ENCODE measurements at regions of chr12 and their contacts with region 1.

Region 1: GRCh38 chr12:3885277-3886094 is 12.3 kb upstream of the PARP11 start:
- DNase-seq: peak in 1 of 2 experiments; percentile 67
- H3K4me3 ChIP-seq: no peak overlapping the region
- H3K4me3 Mint-ChIP-seq: no peak overlapping the region
- H3K27ac Mint-ChIP-seq: no peak overlapping the region
- H3K4me1 ChIP-seq: 0 out of 2 replicates have a peak, but pooled peaks cover 3% of the 10 kb centered on the region
- H3K4me1 Mint-ChIP-seq: peaks cover 14% of the 10 kb centered on the region
- H3K27me3 ChIP-seq: no peaks in the 10 kb centered on the region
- H3K27me3 Mint-ChIP-seq: peaks cover 7% of the 10 kb centered on the region
- CTCF ChIP-seq: peak; percentile 90 to 98

Region 2: DNA sequence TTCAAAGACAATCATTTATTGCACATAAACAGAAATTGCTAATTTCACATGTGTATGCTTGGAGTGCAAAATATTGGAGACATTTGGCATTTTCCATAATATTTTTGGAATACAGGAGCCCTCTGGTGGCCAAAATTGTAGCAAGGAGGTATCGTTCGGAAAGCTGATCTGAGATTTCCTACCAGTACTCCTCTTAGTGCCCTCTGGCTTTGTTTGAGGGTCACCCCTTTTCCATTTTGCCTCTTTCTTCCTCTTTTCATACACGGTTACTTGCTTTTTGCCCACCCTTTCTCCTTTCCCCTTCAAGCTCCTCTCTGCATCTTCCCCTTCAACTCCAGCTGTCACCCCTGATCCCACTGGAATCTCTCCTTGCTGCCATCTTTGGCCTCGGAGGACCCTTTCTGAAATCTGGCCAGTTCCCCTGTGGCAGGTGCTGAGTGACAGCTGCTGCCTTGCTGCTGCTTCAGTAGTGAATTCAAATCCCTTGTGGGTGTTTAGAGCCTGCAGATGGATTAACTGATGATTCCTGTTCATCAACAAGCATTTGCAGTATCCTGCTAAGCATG is 152.3 kb after region 1 on chr12:
- CTCF ChIA-PET with region 1: interaction called, 71 read pairs
- POLR2A ChIA-PET with region 1: no interaction called
- intact Hi-C with region 1: loop called (anchors 1 kb)
- DNase-seq: peak; percentile 54 to 82
- H3K4me3 ChIP-seq: no peak overlapping the region
- H3K4me3 Mint-ChIP-seq: no peak overlapping the region
- H3K27ac Mint-ChIP-seq: no peak overlapping the region
- H3K4me1 ChIP-seq: peaks cover 36% of the 10 kb centered on the region
- H3K4me1 Mint-ChIP-seq: peaks cover 38% of the 10 kb centered on the region
- H3K27me3 ChIP-seq: no peaks in the 10 kb centered on the region
- H3K27me3 Mint-ChIP-seq: no peaks in the 10 kb centered on the region
- CTCF ChIP-seq: peak; percentile 89 to 95

Region 3: DNA sequence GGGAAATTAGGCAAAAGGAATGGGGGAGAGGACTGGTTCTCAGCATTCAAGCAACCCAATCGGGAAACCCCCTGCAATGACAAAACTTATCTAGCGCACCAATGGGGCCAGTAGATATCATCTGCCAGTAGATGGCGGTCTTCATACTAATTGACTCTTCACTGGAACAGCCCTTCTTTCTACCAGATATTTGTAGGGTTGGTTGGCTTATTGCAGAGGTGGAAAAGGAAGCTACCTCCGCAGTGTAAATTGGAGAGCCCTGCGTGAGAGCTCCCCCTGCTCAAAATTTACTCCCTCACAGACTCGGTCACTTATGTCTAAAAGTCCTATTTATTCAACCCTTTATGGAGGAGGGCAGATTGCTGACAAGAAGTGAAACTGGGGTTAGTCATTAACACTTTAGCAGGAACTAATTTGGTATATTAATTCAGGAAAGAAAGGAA is 222.0 kb after region 1 on chr12:
- CTCF ChIA-PET with region 1: no interaction called
- POLR2A ChIA-PET with region 1: no interaction called
- intact Hi-C with region 1: loop called (anchors 2 kb)
- DNase-seq: peak; percentile 68 to 70
- H3K4me3 ChIP-seq: no peak overlapping the region
- H3K4me3 Mint-ChIP-seq: no peak overlapping the region
- H3K27ac Mint-ChIP-seq: no peak overlapping the region
- H3K4me1 ChIP-seq: no peaks in the 10 kb centered on the region
- H3K4me1 Mint-ChIP-seq: peaks cover 6% of the 10 kb centered on the region
- H3K27me3 ChIP-seq: no peaks in the 10 kb centered on the region
- H3K27me3 Mint-ChIP-seq: peaks cover 16% of the 10 kb centered on the region
- CTCF ChIP-seq: peak; percentile 75 to 82

Region 4: DNA sequence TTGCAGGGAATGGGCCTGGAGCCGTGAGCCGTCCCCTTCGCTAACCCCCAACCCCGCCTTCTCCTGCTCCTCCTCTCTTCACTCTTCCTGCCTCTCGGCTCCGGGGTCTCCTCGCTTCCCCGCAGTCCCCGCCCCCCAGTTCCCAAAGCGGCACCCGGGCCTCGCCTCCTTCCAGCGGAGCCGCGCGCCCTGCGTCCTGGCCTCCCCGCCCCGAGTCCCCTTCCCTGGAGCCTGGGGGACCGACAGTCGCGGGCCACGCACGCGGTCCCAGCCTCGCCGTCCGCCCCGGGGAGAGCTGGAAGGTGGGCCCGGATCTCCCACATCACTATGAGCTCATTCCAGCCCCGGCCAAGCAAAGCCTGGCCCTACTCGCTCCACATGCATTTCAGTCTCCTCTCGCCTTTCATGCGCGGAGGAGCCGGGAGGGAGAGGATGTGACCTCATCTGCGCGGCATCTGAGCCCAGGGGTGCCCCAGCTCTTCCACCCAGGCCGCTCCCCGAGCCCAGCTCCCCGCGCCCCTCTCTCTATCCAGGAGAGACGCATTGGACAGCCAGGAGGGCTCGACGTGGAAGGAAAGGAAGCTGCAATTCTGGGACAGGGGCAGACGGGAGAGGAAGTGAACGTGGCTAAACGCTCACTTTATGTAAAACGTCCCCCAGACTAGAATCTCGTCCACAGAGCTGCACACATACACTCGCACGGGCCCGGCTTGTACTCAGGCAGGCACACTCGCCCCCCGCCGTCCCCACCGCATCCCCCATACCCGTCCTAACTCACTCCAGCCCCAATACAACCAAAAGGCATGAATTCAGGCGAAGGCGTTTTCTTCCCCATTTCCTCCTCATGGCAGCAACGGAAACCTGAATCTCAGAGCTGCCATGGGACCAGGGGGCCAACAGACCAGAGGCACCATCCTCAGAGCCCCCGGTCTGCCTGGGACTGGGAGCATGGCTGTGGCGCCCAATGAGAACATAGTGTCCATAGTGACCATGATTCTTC is 279.4 kb after region 1 on chr12:
- CTCF ChIA-PET with region 1: no interaction called
- POLR2A ChIA-PET with region 1: no interaction called
- intact Hi-C with region 1: loop called (anchors 10 kb)
- DNase-seq: peak; percentile 51 to 62
- H3K4me3 ChIP-seq: peak overlapping the region; percentile 41
- H3K4me3 Mint-ChIP-seq: peak overlapping the region; percentile 68
- H3K27ac Mint-ChIP-seq: no peak overlapping the region
- H3K4me1 ChIP-seq: peaks cover 5% of the 10 kb centered on the region; the same call in 1 of the 2 replicates
- H3K4me1 Mint-ChIP-seq: no peaks in the 10 kb centered on the region
- H3K27me3 ChIP-seq: no peaks in the 10 kb centered on the region; the same call in 1 of the 2 replicates
- H3K27me3 Mint-ChIP-seq: peaks cover 15% of the 10 kb centered on the region
- CTCF ChIP-seq: no peak

Measured in Caco-2 (cell line).